Right ventricle myocardium inferior (tissue), 1 donor: ENCODE measurements at regions of chr10 and their contacts with region 1.

Region 1: DNA sequence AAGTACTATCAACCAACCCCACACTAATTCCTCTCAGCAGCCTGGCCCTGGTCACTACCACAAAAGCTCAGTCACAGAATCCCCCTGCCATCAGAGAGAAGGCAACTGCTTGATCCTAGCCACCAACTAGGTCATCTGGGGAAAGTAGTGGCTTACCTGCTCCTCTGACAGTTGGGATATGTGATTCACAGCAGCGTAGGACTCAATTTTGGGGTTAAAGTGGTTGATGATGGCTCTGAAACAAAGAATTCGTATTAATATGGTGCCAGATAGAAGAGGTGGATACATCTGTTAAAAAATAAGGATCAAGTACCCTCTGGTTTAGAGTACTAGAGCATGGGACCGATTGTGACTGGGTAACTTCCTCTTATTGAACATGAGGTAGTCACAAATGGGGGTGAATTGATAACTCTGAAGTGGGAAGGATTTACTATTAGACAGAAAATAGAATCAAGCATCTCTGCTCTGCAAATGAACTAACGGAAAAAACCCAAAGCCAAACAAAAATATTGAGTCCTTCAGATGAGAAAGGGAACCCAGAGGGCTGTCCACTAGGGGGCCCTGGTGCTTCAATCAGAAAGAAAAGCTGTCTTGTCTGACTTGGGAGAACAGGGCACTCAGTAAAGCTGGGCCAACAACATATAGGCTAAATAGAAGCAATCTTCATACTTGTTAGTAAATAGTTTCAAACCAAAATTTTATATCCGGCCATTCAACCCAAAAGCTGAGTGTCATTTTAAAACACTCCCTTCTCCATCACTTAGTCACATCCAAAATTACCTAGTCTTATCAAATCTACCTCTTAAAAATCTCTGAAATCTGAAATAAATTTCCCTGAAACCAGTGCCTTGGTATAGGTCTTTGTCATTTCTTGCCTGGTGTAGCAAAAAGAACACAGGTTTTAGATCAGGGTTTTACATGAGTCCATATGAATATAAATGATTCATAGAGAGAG is 45.9 kb upstream of the KCNIP2 start:
- DNase-seq: peak; percentile 81
- ATAC-seq: no peak

Region 2: DNA sequence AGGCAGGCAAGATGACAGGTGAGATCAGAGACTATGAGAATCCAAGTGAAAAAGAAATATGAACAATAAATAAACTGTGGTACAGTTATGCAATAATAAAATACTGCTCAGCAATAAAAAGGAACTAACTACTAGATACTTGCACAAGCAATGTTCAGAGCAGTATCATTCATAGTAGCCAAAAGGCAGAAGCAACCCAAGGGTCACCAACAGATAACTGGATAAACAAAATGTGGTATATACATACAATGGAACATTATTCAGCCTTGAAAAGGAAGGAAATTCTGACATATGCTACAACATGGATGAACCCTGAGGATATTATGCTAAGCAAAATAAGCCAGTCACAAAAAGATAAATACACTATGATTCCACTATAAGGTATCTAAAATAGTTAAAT is 31.0 kb after region 1 on chr10:
- intact Hi-C with region 1: no loop called
- DNase-seq: no peak
- ATAC-seq: no peak

Region 3: DNA sequence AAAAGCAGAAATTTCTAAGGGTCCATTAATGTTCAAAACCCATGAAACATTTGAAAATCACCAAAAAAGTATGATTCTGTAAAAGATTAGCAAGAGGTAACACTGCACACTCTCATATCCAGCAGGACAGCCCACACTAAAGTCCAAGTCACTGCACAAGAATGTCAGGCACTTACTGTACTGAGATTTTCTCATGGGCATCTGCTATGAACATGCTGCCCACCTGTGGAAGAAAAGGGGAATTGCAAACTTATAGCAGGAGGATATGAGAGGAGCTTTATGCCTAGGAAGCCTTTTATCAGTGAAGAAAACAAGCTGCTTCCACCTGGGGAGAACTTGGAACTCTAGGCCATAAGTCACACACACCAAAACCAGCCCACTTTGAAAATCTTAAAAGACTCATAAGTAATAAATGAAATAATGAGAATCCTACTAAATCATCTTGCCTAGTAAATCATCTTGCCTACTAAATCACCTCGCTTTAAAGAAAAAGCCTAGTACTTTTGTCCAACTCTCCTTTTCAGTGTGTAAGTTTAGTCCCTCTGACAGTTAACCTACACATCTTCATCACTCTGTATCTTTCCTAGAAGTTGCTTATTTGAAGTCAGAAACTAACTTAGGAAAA is 120.4 kb after region 1 on chr10:
- intact Hi-C with region 1: loop called (anchors 1 kb)
- DNase-seq: no peak
- ATAC-seq: peak; percentile 91

Region 4: GRCh38 chr10:102040305-102041050 is 150.9 kb after region 1 on chr10:
- intact Hi-C with region 1: no loop called
- DNase-seq: no peak
- ATAC-seq: no peak